ENCODE measurements at regions of chrX and their contacts with region 1.

Region 1: GRCh38 chrX:43557792-43558191 is 98.3 kb upstream of the MAOA start:
- DNase-seq: peak in 4 of 5 donors; percentile 22 to 52 (median 30)
- ATAC-seq: peak in 1 of 4 donors; percentile 62
- H3K4me3 ChIP-seq: no peak overlapping the region
- H3K27ac ChIP-seq: no peak overlapping the region
- H3K4me1 ChIP-seq: peaks cover 0 to 6% (median 0%) of the 10 kb centered on the region in 12 donors
- H3K27me3 ChIP-seq: peaks cover 0 to 1% (median 0%) of the 10 kb centered on the region in 9 donors
- CTCF ChIP-seq: peak; percentile 41 to 71 (median 60)
- POLR2A ChIP-seq: no peak

Region 2: GRCh38 chrX:41781502-41781901 is 1776.3 kb before region 1 on chrX:
- intact Hi-C with region 1: loop called in 5 of 10 experiments (anchors 5 to 10 kb)
- DNase-seq: no peak
- ATAC-seq: peak in 2 of 4 donors; percentile 39 to 62
- H3K4me3 ChIP-seq: no peak overlapping the region
- H3K27ac ChIP-seq: no peak overlapping the region
- H3K4me1 ChIP-seq: peaks cover 0 to 10% (median 0%) of the 10 kb centered on the region in 12 donors
- H3K27me3 ChIP-seq: peaks cover 0 to 4% (median 0%) of the 10 kb centered on the region in 9 donors
- CTCF ChIP-seq: peak; percentile 42 to 71 (median 55)
- POLR2A ChIP-seq: no peak

Region 3: GRCh38 chrX:43349363-43349762 is 208.4 kb before region 1 on chrX:
- intact Hi-C with region 1: loop called in 2 of 10 experiments (anchors 10 kb)
- DNase-seq: peak in 1 of 5 donors; percentile 3
- ATAC-seq: peak in 1 of 4 donors; percentile 56
- H3K4me3 ChIP-seq: no peak overlapping the region
- H3K27ac ChIP-seq: no peak overlapping the region
- H3K4me1 ChIP-seq: no peaks in the 10 kb centered on the region
- H3K27me3 ChIP-seq: peaks cover 0 to 24% (median 0%) of the 10 kb centered on the region in 9 donors
- CTCF ChIP-seq: peak; percentile 7 to 65 (median 36)
- POLR2A ChIP-seq: no peak

Region 4: DNA sequence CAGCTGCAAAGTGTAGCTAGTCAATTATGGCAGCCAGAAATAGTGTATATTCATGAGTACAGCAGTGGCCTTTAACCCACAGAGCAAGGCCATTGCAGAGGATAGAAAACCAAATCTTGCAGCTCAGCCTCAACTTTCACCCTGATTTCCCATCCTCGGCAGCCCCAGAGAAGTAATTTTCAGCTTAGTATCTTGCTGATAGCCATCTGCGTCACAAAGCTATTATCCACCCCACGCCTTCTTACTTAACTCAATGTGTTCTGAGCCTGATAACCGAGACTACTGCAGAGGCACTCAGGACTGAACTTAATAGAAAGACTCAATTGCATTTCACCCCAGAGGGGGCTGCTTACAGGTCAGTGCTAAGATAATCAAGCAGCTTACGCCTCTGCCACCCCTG is 76.2 kb before region 1 on chrX:
- intact Hi-C with region 1: no loop called
- DNase-seq: no peak
- ATAC-seq: no peak
- H3K4me3 ChIP-seq: no peak overlapping the region
- H3K27ac ChIP-seq: no peak overlapping the region
- H3K4me1 ChIP-seq: no peaks in the 10 kb centered on the region
- H3K27me3 ChIP-seq: peaks cover 0 to 15% (median 0%) of the 10 kb centered on the region in 9 donors
- CTCF ChIP-seq: no peak
- POLR2A ChIP-seq: no peak

Region 5: GRCh38 chrX:43654431-43655150 is 96.8 kb after region 1 on chrX:
- intact Hi-C with region 1: loop called in 1 of 10 experiments (anchors 10 kb)
- DNase-seq: peak; percentile 91 to 95 (median 94)
- ATAC-seq: peak; percentile 94 to 98 (median 97)
- H3K4me3 ChIP-seq: peak overlapping the region; percentile 43 to 98 (median 76)
- H3K27ac ChIP-seq: peak overlapping the region; percentile 81 to 95 (median 88)
- H3K4me1 ChIP-seq: peaks cover 0 to 6% (median 0%) of the 10 kb centered on the region in 12 donors
- H3K27me3 ChIP-seq: peaks cover 0 to 17% (median 0%) of the 10 kb centered on the region in 9 donors
- CTCF ChIP-seq: peak in 10 of 12 donors; percentile 11 to 53 (median 31)
- POLR2A ChIP-seq: peak in 1 of 2 donors; percentile 95

Region 6: GRCh38 chrX:43785930-43786591 is 228.3 kb after region 1 on chrX:
- intact Hi-C with region 1: no loop called
- DNase-seq: no peak
- ATAC-seq: no peak
- H3K4me3 ChIP-seq: no peak overlapping the region
- H3K27ac ChIP-seq: no peak overlapping the region
- H3K4me1 ChIP-seq: no peaks in the 10 kb centered on the region
- H3K27me3 ChIP-seq: peaks cover 0 to 9% (median 0%) of the 10 kb centered on the region in 9 donors
- CTCF ChIP-seq: no peak
- POLR2A ChIP-seq: no peak

Region 7: DNA sequence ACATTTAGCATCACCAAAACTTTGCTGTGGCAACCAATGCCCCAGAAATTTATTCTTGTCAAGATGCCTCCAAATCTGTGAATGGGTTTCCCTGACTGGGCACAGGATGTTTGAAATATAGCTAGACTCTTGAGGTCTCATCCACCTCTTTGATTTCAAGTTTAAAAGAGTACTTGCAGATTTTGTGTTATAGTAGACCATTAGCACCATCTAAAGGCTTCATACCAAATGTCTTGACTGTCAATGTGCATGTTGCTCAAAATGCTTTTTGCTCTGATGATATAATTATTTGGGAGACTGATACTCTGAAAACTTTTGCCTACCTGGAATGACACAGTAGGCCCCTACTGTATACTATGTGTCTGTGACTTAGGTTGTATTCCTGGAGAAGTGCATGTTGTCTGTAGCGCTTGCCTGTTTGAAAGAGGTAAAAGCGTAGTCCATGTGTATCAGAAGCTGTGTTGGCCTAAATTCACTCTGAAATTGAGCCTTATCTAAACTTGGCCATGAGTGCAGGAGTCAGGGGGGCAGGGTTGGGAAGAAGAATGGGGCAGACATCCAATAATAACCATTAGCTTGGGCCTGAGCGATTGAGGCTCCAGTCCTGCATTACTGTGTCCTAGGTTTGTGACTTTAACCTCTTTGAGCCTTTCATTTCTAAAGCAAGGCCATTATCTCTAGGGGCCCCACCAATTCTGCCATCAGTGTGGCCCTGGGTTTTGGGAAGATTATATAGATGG is 381.6 kb after region 1 on chrX:
- intact Hi-C with region 1: loop called in 5 of 10 experiments (anchors 5 to 10 kb)
- DNase-seq: no peak
- ATAC-seq: peak in 2 of 4 donors; percentile 50 to 59
- H3K4me3 ChIP-seq: no peak overlapping the region
- H3K27ac ChIP-seq: no peak overlapping the region
- H3K4me1 ChIP-seq: no peaks in the 10 kb centered on the region
- H3K27me3 ChIP-seq: peaks cover 0 to 25% (median 0%) of the 10 kb centered on the region in 9 donors
- CTCF ChIP-seq: peak in 10 of 12 donors; percentile 2 to 50 (median 32)
- POLR2A ChIP-seq: no peak